Endothelial cell of umbilical vein (primary cell): ENCODE measurements at regions of chr12 and their contacts with region 1.

Region 1: DNA sequence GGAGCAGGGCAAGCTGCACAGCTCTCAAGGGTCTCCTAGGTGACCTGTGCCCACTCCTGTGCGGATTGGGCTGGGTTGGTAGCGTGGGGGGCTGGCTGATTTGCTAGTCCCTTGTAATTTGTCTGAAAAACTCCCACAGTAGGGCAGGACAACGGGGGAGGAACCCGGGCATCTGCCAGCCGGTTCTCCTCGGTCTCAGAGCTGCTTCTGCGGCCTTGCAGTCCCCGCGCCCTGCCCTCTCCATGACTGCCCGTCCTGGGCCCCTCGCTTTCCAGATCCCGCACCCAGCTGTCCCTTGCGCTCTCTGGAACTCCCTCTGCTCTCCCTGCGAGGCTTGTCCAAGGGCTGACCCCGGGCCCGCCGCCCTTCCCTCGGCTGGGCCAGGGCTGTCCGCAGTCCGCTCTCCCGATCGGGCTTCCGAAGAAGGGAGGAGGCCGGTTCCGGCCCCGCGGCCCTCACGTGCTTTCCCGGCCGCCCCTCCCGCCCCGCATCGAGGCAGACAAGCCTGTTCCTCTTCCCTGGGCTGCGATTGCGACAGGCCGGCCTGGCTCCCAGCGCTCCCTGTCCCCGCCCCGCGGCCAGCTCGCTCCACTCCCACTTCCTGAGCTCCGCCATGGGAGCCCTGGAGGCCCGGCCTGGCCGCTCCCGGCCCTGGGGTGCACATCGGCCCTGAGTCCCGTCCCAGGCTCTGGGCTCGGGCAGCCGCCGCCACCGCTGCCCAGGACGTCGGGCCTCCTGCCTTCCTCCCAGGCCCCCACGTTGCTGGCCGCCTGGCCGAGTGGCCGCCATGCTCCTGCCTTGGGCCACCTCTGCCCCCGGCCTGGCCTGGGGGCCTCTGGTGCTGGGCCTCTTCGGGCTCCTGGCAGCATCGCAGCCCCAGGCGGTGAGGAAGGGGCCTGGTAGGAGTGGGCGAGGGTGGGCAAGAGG is at the start of gene LTBR:
- DNase-seq: peak; percentile 89
- H3K4me3 ChIP-seq: peak within 1 kb of the TSS; percentile 48 to 73 (median 72)
- H3K27ac ChIP-seq: peak within 1 kb of the TSS; percentile 81
- H3K4me1 ChIP-seq: peaks cover 20% of the 10 kb centered on the region
- H3K27me3 ChIP-seq: no peaks in the 10 kb centered on the region
- CTCF ChIP-seq: peak in 1 of 2 donors; percentile 5
- POLR2A ChIP-seq: peak; percentile 87
- total RNA-seq, gene LTBR: 84.1 and 102 TPM in 2 replicates

Region 2: GRCh38 chr12:5154091-5154490 is 1229.7 kb before region 1 on chr12:
- CTCF ChIA-PET with region 1: no interaction called
- POLR2A ChIA-PET with region 1: no interaction called
- dilution Hi-C with region 1: no loop called
- intact Hi-C with region 1: no loop called
- DNase-seq: no peak
- H3K4me3 ChIP-seq: no peak overlapping the region
- H3K27ac ChIP-seq: no peak overlapping the region
- H3K4me1 ChIP-seq: no peaks in the 10 kb centered on the region
- H3K27me3 ChIP-seq: peaks cover 0 to 2% of the 10 kb centered on the region in 2 experiments
- CTCF ChIP-seq: no peak
- POLR2A ChIP-seq: no peak

Region 3: GRCh38 chr12:6341417-6342139 is 42.3 kb before region 1 on chr12 and contains the start of gene TNFRSF1A:
- CTCF ChIA-PET with region 1: interaction called, 20 read pairs
- POLR2A ChIA-PET with region 1: interaction called, 7 read pairs
- dilution Hi-C with region 1: no loop called
- intact Hi-C with region 1: loop called (anchors 1 kb)
- DNase-seq: peak; percentile 70
- H3K4me3 ChIP-seq: peak within 1 kb of the TSS; percentile 89 to 98 (median 89)
- H3K27ac ChIP-seq: peak within 1 kb of the TSS; percentile 69
- H3K4me1 ChIP-seq: peaks cover 56% of the 10 kb centered on the region
- H3K27me3 ChIP-seq: no peaks in the 10 kb centered on the region
- CTCF ChIP-seq: no peak
- POLR2A ChIP-seq: peak; percentile 47
- total RNA-seq, gene TNFRSF1A: 84.0 and 98.2 TPM in 2 replicates

Region 4: DNA sequence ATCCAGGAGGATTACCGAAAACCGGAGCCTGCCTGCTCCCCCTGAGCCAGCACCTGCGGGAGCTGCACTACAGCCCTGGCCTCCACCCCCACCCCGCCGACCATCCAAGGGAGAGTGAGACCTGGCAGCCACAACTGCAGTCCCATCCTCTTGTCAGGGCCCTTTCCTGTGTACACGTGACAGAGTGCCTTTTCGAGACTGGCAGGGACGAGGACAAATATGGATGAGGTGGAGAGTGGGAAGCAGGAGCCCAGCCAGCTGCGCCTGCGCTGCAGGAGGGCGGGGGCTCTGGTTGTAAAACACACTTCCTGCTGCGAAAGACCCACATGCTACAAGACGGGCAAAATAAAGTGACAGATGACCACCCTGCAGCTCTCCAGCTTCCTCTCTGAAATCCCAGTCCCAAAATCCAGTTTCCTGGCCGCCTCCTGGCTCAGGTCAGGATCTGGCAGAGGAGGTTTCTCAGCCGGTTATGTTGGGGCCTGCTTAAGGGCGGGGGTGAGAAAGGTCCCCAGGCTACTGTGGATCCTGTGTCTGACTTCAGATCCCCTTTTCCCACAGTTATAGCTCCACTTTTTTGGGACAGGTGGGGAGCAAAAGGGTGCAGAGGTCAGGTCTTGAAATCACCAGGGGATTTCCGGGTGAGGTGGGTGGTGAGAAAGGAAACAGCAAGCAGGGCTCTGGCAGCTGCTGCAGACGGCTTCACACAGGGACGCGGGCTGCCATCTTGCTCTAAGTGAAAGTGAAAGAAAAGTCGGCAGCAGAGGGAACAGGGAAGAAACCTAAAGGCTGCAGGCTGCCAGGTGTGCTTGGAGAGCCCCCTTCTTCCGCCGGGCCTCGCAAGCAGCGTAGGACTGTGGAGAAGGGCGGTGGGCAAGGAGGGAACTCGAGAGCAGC is 67.8 kb after region 1 on chr12 and contains the start of gene TAPBPL:
- CTCF ChIA-PET with region 1: no interaction called
- POLR2A ChIA-PET with region 1: no interaction called
- dilution Hi-C with region 1: no loop called
- intact Hi-C with region 1: loop called (anchors 1 kb)
- DNase-seq: peak; percentile 89
- H3K4me3 ChIP-seq: peak within 1 kb of the TSS; percentile 6 to 51 (median 31)
- H3K27ac ChIP-seq: peak within 1 kb of the TSS; percentile 62
- H3K4me1 ChIP-seq: peaks cover 27% of the 10 kb centered on the region
- H3K27me3 ChIP-seq: no peaks in the 10 kb centered on the region
- CTCF ChIP-seq: no peak
- POLR2A ChIP-seq: peak; percentile 41
- total RNA-seq, gene TAPBPL: 9.9 and 11.7 TPM in 2 replicates